CD8-positive, alpha-beta T cell (primary cell): ENCODE measurements at regions of chr7 and their contacts with region 1.

Region 1: DNA sequence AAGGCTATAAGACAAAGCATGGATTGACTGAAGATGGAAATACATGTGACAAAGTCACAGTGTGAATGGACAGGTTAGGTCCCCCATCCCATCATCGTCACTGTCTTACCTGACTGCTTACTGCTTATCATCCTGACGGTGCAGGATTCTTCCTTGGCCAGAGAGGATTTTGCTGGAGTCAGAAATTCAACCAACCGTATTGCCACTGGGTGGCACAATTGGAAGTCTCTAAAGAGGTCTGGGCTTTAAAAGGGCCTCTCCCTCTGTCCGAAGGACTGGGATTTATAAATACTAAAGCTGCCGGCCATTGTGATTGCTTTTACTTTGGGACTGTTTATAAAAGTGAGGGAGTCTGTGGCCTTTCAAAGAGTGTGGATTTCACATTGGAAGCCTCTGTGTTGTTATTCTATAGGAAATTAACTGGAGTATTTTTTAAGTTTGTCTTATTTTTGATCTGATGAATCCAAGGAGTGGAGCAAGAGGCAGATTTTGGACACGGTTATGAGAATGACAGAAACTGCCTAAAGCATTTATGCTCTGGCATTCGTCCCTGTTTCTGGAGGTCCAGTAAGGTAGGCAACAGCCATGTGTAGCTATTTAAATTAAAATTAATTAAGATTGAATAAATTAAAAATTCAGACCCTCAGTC is 113.3 kb upstream of the CREB5 start:
- DNase-seq: peak in 1 of 9 experiments; percentile 6
- ATAC-seq: no peak
- H3K4me3 ChIP-seq: no peak overlapping the region
- H3K4me3 Mint-ChIP-seq: no peak overlapping the region
- H3K27ac ChIP-seq: no peak overlapping the region
- H3K27ac Mint-ChIP-seq: no peak overlapping the region
- H3K4me1 ChIP-seq: no peaks in the 10 kb centered on the region
- H3K4me1 Mint-ChIP-seq: no peaks in the 10 kb centered on the region
- H3K27me3 ChIP-seq: peaks cover 0 to 2% of the 10 kb centered on the region in 2 experiments
- H3K27me3 Mint-ChIP-seq: peaks cover 8% of the 10 kb centered on the region
- CTCF ChIP-seq: no peak

Region 2: GRCh38 chr7:28329661-28330363 is 30.8 kb after region 1 on chr7:
- CTCF ChIA-PET with region 1: interaction called, 7 read pairs
- POLR2A ChIA-PET with region 1: interaction called, 3 read pairs
- intact Hi-C with region 1: loop called in 1 of 2 experiments (anchors 1 kb)
- DNase-seq: peak in 6 of 9 experiments; percentile 5 to 65 (median 32)
- ATAC-seq: peak; percentile 55
- H3K4me3 ChIP-seq: peak overlapping the region; percentile 13 to 18
- H3K4me3 Mint-ChIP-seq: peak overlapping the region; percentile 80
- H3K27ac ChIP-seq: peak overlapping the region in 1 of 2 experiments; percentile 30
- H3K27ac Mint-ChIP-seq: peak overlapping the region; percentile 86
- H3K4me1 ChIP-seq: peaks cover 34% of the 10 kb centered on the region
- H3K4me1 Mint-ChIP-seq: peaks cover 40% of the 10 kb centered on the region
- H3K27me3 ChIP-seq: no peaks in the 10 kb centered on the region
- H3K27me3 Mint-ChIP-seq: no peaks in the 10 kb centered on the region
- CTCF ChIP-seq: no peak

Region 3: DNA sequence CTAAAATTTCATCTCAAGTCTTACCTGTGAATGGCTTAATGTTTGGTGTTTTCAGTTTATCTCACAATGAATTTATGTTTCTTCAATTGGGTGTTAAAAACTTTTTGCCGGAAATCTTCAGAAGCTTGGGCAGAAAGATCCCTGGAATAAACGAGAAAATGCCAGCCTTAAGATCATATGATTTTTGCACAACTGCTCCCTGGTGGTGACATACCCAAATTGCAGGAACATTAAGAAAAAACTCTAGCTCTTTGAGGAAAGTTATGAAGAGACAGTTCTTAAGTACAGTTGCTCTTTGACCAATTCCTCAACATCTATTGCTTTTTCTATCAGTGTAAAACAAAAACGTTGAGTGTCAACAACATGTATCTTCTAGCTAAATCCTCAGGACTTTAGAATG is 65.1 kb after region 1 on chr7:
- CTCF ChIA-PET with region 1: interaction called, 4 read pairs
- POLR2A ChIA-PET with region 1: no interaction called
- intact Hi-C with region 1: loop called in 1 of 2 experiments (anchors 5 kb)
- DNase-seq: no peak
- ATAC-seq: no peak
- H3K4me3 ChIP-seq: no peak overlapping the region
- H3K4me3 Mint-ChIP-seq: no peak overlapping the region
- H3K27ac ChIP-seq: no peak overlapping the region
- H3K27ac Mint-ChIP-seq: no peak overlapping the region
- H3K4me1 ChIP-seq: no peaks in the 10 kb centered on the region
- H3K4me1 Mint-ChIP-seq: peaks cover 2% of the 10 kb centered on the region
- H3K27me3 ChIP-seq: no peaks in the 10 kb centered on the region
- H3K27me3 Mint-ChIP-seq: peaks cover 2% of the 10 kb centered on the region
- CTCF ChIP-seq: no peak

Region 4: GRCh38 chr7:28378574-28379149 is 79.7 kb after region 1 on chr7:
- CTCF ChIA-PET with region 1: no interaction called
- POLR2A ChIA-PET with region 1: no interaction called
- intact Hi-C with region 1: loop called in 1 of 2 experiments (anchors 5 kb)
- DNase-seq: no peak
- ATAC-seq: no peak
- H3K4me3 ChIP-seq: no peak overlapping the region
- H3K4me3 Mint-ChIP-seq: no peak overlapping the region
- H3K27ac ChIP-seq: no peak overlapping the region
- H3K27ac Mint-ChIP-seq: no peak overlapping the region
- H3K4me1 ChIP-seq: no peaks in the 10 kb centered on the region
- H3K4me1 Mint-ChIP-seq: no peaks in the 10 kb centered on the region
- H3K27me3 ChIP-seq: no peaks in the 10 kb centered on the region
- H3K27me3 Mint-ChIP-seq: peaks cover 2% of the 10 kb centered on the region
- CTCF ChIP-seq: no peak

Region 5: GRCh38 chr7:28608731-28609130 is 309.7 kb after region 1 on chr7:
- CTCF ChIA-PET with region 1: no interaction called
- POLR2A ChIA-PET with region 1: no interaction called
- intact Hi-C with region 1: no loop called
- DNase-seq: no peak
- ATAC-seq: no peak
- H3K4me3 ChIP-seq: no peak overlapping the region
- H3K4me3 Mint-ChIP-seq: no peak overlapping the region
- H3K27ac ChIP-seq: no peak overlapping the region
- H3K27ac Mint-ChIP-seq: no peak overlapping the region
- H3K4me1 ChIP-seq: no peaks in the 10 kb centered on the region
- H3K4me1 Mint-ChIP-seq: no peaks in the 10 kb centered on the region
- H3K27me3 ChIP-seq: no peaks in the 10 kb centered on the region
- H3K27me3 Mint-ChIP-seq: peaks cover 6% of the 10 kb centered on the region
- CTCF ChIP-seq: no peak

Region 6: GRCh38 chr7:28626624-28627262 is 327.7 kb after region 1 on chr7:
- CTCF ChIA-PET with region 1: interaction called, 7 read pairs
- POLR2A ChIA-PET with region 1: no interaction called
- intact Hi-C with region 1: loop called (anchors 2 to 5 kb)
- DNase-seq: peak in 2 of 9 experiments; percentile 11 to 32
- ATAC-seq: no peak
- H3K4me3 ChIP-seq: no peak overlapping the region
- H3K4me3 Mint-ChIP-seq: no peak overlapping the region
- H3K27ac ChIP-seq: no peak overlapping the region
- H3K27ac Mint-ChIP-seq: no peak overlapping the region
- H3K4me1 ChIP-seq: no peaks in the 10 kb centered on the region
- H3K4me1 Mint-ChIP-seq: no peaks in the 10 kb centered on the region
- H3K27me3 ChIP-seq: no peaks in the 10 kb centered on the region
- H3K27me3 Mint-ChIP-seq: no peaks in the 10 kb centered on the region
- CTCF ChIP-seq: peak; percentile 16

Region 7: GRCh38 chr7:28853834-28854749 is 555.1 kb after region 1 on chr7:
- CTCF ChIA-PET with region 1: interaction called, 8 read pairs
- POLR2A ChIA-PET with region 1: no interaction called
- intact Hi-C with region 1: loop called in 1 of 2 experiments (anchors 1 kb)
- DNase-seq: peak; percentile 39 to 83 (median 59)
- ATAC-seq: peak; percentile 72
- H3K4me3 ChIP-seq: peak overlapping the region; percentile 45 to 62
- H3K4me3 Mint-ChIP-seq: peak overlapping the region; percentile 78
- H3K27ac ChIP-seq: no peak overlapping the region
- H3K27ac Mint-ChIP-seq: no peak overlapping the region
- H3K4me1 ChIP-seq: peaks cover 7% of the 10 kb centered on the region
- H3K4me1 Mint-ChIP-seq: peaks cover 9% of the 10 kb centered on the region
- H3K27me3 ChIP-seq: peaks cover 12% of the 10 kb centered on the region in 2 experiments
- H3K27me3 Mint-ChIP-seq: peaks cover 47% of the 10 kb centered on the region
- CTCF ChIP-seq: peak; percentile 65

Region 8: GRCh38 chr7:28904578-28905048 is 605.6 kb after region 1 on chr7:
- CTCF ChIA-PET with region 1: no interaction called
- POLR2A ChIA-PET with region 1: no interaction called
- intact Hi-C with region 1: no loop called
- DNase-seq: no peak
- ATAC-seq: no peak
- H3K4me3 ChIP-seq: no peak overlapping the region
- H3K4me3 Mint-ChIP-seq: no peak overlapping the region
- H3K27ac ChIP-seq: no peak overlapping the region
- H3K27ac Mint-ChIP-seq: no peak overlapping the region
- H3K4me1 ChIP-seq: no peaks in the 10 kb centered on the region
- H3K4me1 Mint-ChIP-seq: no peaks in the 10 kb centered on the region
- H3K27me3 ChIP-seq: no peaks in the 10 kb centered on the region
- H3K27me3 Mint-ChIP-seq: peaks cover 7% of the 10 kb centered on the region
- CTCF ChIP-seq: no peak